Motor neuron (in vitro differentiated cells): ENCODE measurements at regions of chr7 and their contacts with region 1.

Region 1: GRCh38 chr7:119175911-119176627 is 951.6 kb downstream of the ANKRD7 start:
- ATAC-seq: peak; percentile 38 to 95 (median 66)
- H3K4me3 ChIP-seq: no peak overlapping the region
- H3K27ac ChIP-seq: no peak overlapping the region
- H3K4me1 ChIP-seq: peaks cover 6 to 11% of the 10 kb centered on the region in 2 donors

Region 2: DNA sequence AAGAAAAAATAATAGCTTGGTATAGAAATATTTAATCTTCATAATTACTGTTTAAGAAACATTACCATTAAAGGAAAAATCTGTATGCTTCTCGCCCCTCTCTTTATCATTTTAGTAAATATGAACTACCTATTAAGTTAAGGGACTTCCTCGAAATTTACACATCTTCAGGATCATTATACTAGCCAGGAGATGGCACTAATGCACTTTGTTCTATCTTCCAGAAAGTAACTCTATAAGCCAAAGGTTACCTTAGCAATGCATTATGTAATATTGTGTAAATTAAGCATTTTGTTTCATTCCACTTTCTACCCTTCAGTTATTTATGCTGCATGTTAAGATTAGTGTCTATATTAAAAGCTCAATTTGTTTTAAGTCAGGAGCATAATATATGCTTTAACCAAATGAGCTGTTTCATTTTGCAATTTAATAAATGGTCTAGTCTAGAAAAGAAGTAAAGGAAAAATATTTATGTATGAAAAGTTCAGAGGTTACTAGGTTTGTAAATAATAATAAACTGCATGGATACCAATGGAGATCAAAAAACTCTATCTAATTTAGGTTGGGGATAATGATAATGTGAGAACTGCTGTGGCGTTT is 823.1 kb before region 1 on chr7:
- in situ Hi-C with region 1: loop called in 1 of 9 experiments (anchors 25 kb)
- ATAC-seq: peak in 3 of 8 experiments; percentile 25 to 74 (median 33)
- H3K4me3 ChIP-seq: no peak overlapping the region
- H3K27ac ChIP-seq: no peak overlapping the region
- H3K4me1 ChIP-seq: no peaks in the 10 kb centered on the region

Region 3: DNA sequence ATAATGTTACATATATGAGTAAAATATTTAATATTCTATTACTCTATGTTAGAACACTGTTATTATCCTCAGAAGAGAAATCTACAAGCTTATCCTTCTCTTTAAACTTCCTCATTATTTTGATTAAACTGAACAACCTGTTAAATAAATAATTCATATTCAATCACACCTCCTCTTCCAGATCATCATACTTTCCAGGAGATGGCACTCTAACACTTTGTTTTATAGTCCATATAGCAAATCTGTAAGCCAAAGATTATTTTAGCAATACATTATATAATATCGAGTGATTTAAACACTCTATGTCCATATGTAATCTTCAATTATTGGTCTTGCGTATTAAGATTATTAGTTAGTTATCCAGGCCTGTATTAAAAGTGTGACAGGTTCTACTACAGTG is 257.5 kb before region 1 on chr7:
- in situ Hi-C with region 1: loop called in 2 of 9 experiments (anchors 25 kb)
- ATAC-seq: peak in 2 of 8 experiments; percentile 32 to 67
- H3K4me3 ChIP-seq: no peak overlapping the region
- H3K27ac ChIP-seq: no peak overlapping the region
- H3K4me1 ChIP-seq: no peaks in the 10 kb centered on the region

Region 4: GRCh38 chr7:119351320-119351719 is 175.3 kb after region 1 on chr7:
- in situ Hi-C with region 1: no loop called
- ATAC-seq: no peak
- H3K4me3 ChIP-seq: no peak overlapping the region
- H3K27ac ChIP-seq: no peak overlapping the region
- H3K4me1 ChIP-seq: no peaks in the 10 kb centered on the region